ENCODE measurements at regions of chr6 and their contacts with region 1.

Region 1: DNA sequence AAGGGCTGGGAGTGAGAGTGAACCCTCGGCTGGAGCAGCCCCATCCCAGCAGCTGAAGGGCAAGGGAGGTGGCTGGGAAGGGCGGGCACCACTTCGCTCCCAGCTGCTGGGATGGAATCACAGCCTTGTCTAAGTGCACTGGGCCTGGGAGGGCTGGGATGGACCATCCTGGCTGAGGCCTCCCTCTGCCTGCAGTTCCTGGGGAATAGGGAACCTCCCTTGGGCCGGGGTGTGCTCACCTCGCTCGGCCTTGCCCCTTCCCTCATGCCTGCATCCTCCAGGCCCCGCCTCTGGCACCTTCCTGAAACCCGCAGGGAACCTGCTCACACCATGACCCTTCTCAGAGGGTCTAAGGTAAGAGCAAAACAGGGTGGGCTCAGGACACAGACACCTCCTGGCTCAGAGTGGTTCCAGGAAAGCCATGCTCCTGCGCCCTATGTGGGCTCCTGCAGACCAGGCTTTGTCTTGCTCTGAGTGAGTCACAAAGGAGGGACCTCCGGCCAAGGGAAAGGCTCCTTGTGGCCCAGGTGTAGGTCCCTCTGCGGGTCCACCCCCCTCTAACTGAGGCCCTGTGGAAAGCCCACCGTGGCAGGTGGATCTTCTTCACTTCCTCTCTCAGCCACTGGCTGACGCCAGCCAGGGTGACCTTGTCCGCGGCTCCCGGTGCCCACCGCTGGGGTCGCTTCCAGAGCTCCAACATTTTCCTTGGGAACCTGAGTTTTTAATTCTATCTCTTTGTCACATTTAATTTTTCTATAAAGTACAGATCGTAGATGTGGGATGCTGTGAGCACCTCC is 53.9 kb downstream of the SMOC2 start:
- DNase-seq: no peak
- H3K4me3 ChIP-seq: no peak overlapping the region
- CTCF ChIP-seq: no peak
- POLR2A ChIP-seq: no peak

Region 2: DNA sequence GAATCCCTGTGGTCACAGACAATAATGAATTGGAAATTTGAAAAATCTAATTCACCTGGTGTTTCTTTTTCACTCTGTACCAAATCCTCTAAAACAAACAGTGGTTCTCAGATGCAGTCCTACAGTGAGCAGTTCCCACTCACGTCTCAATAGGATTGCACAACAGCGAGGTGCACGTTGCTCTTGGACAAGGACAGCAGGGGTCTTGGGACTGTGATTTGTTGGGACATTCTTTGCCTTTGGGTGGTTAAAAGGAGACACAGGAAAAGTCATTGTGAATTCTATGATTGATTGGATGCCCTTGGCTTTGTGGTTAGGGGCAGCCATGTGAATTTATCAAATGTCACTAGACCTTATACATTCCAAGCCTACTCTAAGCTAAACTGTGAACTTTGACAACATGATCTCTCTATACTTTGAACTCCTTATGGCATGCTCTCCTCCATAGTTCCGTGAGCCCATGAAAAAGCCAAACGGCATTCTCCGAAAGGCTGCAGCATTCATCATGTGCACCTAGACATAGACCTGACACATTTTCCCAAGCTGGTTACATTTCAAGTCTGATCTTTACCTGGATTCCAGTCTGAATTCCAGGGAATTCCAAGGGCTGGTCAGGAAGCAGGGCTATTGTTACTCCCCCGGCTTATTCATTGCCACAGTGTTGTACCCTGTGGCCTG is 1203.2 kb before region 1 on chr6:
- intact Hi-C with region 1: loop called (anchors 5 kb)
- DNase-seq: peak in 1 of 2 donors; percentile 37
- H3K4me3 ChIP-seq: no peak overlapping the region
- CTCF ChIP-seq: no peak
- POLR2A ChIP-seq: no peak

Region 3: GRCh38 chr6:168555618-168556273 is 60.8 kb after region 1 on chr6:
- intact Hi-C with region 1: no loop called
- DNase-seq: peak in 1 of 2 donors; percentile 76
- H3K4me3 ChIP-seq: no peak overlapping the region
- CTCF ChIP-seq: no peak
- POLR2A ChIP-seq: no peak

Region 4: DNA sequence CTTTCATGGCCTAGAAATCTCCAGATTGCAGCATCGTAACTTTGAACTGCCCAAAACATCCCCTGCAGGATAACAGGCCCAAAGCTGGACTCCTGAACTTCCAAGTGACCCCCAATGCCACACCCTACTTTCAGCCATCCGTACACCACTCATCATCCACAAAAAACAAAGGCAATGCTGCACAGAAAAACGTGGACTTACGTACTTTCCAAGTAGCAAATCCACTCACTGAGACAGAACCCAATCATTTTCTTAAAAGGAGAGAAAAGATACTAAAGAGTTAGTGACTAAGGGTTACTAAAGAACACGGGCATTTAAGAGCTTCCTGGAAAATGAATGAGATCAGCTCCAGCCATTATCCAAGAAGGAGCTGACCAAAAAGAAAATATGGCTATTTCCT is 995.9 kb after region 1 on chr6:
- intact Hi-C with region 1: no loop called
- DNase-seq: no peak
- H3K4me3 ChIP-seq: no peak overlapping the region
- CTCF ChIP-seq: no peak
- POLR2A ChIP-seq: no peak